MCF 10A (cell line): ENCODE measurements at regions of chr10 and their contacts with region 1.

Region 1: GRCh38 chr10:15168781-15169554 is 475 bp upstream of the NMT2 start:
- DNase-seq: peak; percentile 92
- H3K4me3 Mint-ChIP-seq: peak overlapping the region; percentile 87
- H3K27ac Mint-ChIP-seq: peak overlapping the region; percentile 80
- H3K4me1 Mint-ChIP-seq: peaks cover 23% of the 10 kb centered on the region
- H3K27me3 Mint-ChIP-seq: no peaks in the 10 kb centered on the region
- CTCF ChIP-seq: no peak

Region 2: DNA sequence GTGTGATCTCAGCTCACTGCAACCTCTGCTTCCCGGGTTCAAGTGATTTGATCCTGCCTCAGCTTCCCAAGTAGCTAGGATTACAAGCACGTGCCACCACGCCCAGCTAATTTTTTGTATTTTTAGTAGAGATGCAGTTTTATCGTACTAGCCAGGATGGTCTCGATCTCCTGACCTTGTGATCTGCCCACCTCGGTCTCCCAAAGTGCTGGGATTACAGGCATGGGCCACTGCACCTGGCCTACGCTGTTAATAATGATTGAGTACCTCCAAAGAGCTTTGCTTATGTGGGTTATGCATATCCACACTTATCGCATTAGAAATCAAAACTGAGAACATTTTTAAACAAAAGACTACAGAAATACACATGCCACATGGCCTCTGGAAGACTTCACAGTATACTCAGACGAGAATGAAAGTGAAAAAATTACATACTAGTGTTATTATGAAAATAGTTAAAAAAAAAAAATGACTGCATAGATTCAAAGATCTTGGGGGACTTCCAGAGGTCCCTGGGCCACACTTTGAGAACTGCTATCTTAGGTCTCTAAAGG is 46.4 kb before region 1 on chr10:
- CTCF ChIA-PET with region 1: interaction called, 8 read pairs
- POLR2A ChIA-PET with region 1: interaction called, 18 read pairs
- intact Hi-C with region 1: no loop called
- DNase-seq: no peak
- H3K4me3 Mint-ChIP-seq: no peak overlapping the region
- H3K27ac Mint-ChIP-seq: no peak overlapping the region
- H3K4me1 Mint-ChIP-seq: peaks cover 6% of the 10 kb centered on the region
- H3K27me3 Mint-ChIP-seq: no peaks in the 10 kb centered on the region
- CTCF ChIP-seq: no peak

Region 3: GRCh38 chr10:15200626-15201025 is 31.7 kb after region 1 on chr10:
- CTCF ChIA-PET with region 1: interaction called, 5 read pairs
- POLR2A ChIA-PET with region 1: interaction called, 9 read pairs
- intact Hi-C with region 1: loop called (anchors 5 kb)
- DNase-seq: peak; percentile 57
- H3K4me3 Mint-ChIP-seq: no peak overlapping the region
- H3K27ac Mint-ChIP-seq: no peak overlapping the region
- H3K4me1 Mint-ChIP-seq: peaks cover 8% of the 10 kb centered on the region
- H3K27me3 Mint-ChIP-seq: no peaks in the 10 kb centered on the region
- CTCF ChIP-seq: no peak

Region 4: DNA sequence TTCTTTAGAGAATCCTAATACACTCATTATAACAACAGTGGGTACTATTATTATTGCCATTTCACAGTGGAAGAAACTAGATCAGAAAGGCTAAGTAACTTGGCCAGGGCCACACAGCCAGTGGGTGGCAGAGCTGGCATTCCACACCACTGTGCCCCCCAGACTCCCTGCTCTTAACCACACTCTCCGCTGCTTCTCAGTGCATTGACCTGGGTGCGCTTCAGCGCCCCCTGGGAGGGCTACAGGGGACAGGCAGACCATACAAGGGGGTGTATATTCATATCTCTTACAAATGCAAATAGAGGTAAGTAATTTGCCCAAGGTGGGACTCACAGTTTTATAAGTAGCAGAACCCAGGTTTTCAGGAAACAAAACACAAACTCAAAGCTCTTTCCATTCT is 76.6 kb after region 1 on chr10:
- CTCF ChIA-PET with region 1: no interaction called
- POLR2A ChIA-PET with region 1: no interaction called
- intact Hi-C with region 1: no loop called
- DNase-seq: peak; percentile 6
- H3K4me3 Mint-ChIP-seq: no peak overlapping the region
- H3K27ac Mint-ChIP-seq: no peak overlapping the region
- H3K4me1 Mint-ChIP-seq: no peaks in the 10 kb centered on the region
- H3K27me3 Mint-ChIP-seq: no peaks in the 10 kb centered on the region
- CTCF ChIP-seq: peak; percentile 13